K562 (cell line): ENCODE measurements at regions of chrX and their contacts with region 1.

Region 1: GRCh38 chrX:125378205-125378604 is 58.5 kb downstream of the TEX13C start:
- DNase-seq: peak in 1 of 4 experiments; percentile 10
- ATAC-seq: peak; percentile 67
- H3K4me3 ChIP-seq: no peak overlapping the region
- H3K27ac ChIP-seq: no peak overlapping the region
- H3K4me1 ChIP-seq: no peaks in the 10 kb centered on the region
- H3K27me3 ChIP-seq: no peaks in the 10 kb centered on the region
- CTCF ChIP-seq: peak in 2 of 3 experiments; percentile 4 to 47; a peak in 3 of 6 replicates
- EP300 ChIP-seq: no peak
- POLR2A ChIP-seq: no peak
- RAD21 ChIP-seq: peak in 1 of 2 experiments; percentile 53; a peak in 3 of 4 replicates

Region 2: GRCh38 chrX:125436855-125437254 is 58.6 kb after region 1 on chrX:
- CTCF ChIA-PET with region 1: no interaction called
- POLR2A ChIA-PET with region 1: no interaction called
- in situ Hi-C with region 1: no loop called
- intact Hi-C with region 1: loop called (anchors 2 kb)
- DNase-seq: peak in 3 of 4 experiments; percentile 8 to 67 (median 10)
- ATAC-seq: peak; percentile 84
- H3K4me3 ChIP-seq: no peak overlapping the region
- H3K27ac ChIP-seq: no peak overlapping the region
- H3K4me1 ChIP-seq: peaks cover 0 to 13% of the 10 kb centered on the region in 2 experiments; a peak in 3 of 5 replicates
- H3K27me3 ChIP-seq: no peaks in the 10 kb centered on the region
- CTCF ChIP-seq: peak; percentile 44 to 57 (median 51)
- EP300 ChIP-seq: no peak
- POLR2A ChIP-seq: no peak
- RAD21 ChIP-seq: peak; percentile 42 to 80; a peak in 3 of 4 replicates

Region 3: DNA sequence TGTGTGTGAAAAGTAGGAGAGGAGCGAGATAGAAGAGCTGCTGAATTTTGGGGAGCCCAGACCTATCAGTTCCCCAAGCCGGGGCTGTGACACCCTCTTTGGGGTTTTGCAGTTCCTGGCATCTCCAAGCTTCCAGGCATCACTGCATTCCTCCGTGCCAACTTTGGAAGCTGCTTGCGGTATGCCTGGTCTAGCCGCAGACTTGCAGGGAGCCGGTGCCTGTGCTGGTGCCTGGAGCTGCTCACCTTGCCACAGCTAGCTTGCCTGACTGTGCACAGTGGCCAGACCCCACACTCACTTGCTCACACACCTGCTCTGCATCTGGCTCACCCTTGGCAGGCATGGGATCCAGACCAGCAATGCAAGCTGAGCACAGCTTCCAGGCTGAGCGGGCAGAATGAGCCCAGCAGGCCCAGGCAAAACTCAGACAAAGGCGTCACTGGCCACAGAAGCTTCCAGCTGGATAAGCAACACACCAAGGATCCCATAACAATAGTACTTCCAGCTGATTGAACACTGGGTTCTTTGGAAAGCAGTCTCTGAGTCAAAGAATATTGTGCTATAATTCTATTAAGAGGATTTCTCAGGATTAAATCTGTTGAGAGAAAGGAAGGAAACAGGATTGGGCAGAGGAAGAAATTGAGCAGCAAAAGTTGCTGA is 332.3 kb after region 1 on chrX:
- CTCF ChIA-PET with region 1: no interaction called
- POLR2A ChIA-PET with region 1: no interaction called
- in situ Hi-C with region 1: no loop called
- intact Hi-C with region 1: no loop called
- DNase-seq: no peak
- ATAC-seq: no peak
- H3K4me3 ChIP-seq: no peak overlapping the region
- H3K27ac ChIP-seq: no peak overlapping the region
- H3K4me1 ChIP-seq: no peaks in the 10 kb centered on the region
- H3K27me3 ChIP-seq: no peaks in the 10 kb centered on the region
- CTCF ChIP-seq: no peak
- EP300 ChIP-seq: no peak
- POLR2A ChIP-seq: no peak
- RAD21 ChIP-seq: no peak